Endothelial cell of umbilical vein (primary cell): ENCODE measurements at regions of chr12 and their contacts with region 1.

Region 1: GRCh38 chr12:69662764-69663163 is 36.3 kb downstream of the BEST3 start:
- DNase-seq: no peak
- H3K4me3 ChIP-seq: no peak overlapping the region
- H3K27ac ChIP-seq: no peak overlapping the region
- H3K4me1 ChIP-seq: no peaks in the 10 kb centered on the region
- H3K27me3 ChIP-seq: peaks cover 2% of the 10 kb centered on the region in 2 experiments
- CTCF ChIP-seq: no peak
- POLR2A ChIP-seq: no peak

Region 2: DNA sequence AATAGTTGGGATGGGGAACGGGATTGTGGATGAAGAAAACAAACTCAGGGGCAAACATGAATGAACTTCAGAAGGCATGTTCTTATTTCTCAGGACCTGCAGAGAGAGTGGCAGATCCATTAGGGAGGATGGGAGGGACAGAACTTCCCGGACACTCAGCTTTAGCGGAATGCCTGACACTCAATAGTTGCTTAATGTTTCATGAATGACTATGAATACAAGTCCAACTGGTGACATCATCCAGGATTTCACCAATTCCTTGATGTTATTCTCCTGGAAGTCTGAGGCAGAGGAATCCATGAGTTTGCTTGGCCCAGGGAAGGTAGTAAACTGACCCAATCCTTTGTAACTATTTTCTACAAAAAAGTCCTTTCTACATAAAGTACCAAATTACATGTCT is 14.3 kb before region 1 on chr12:
- CTCF ChIA-PET with region 1: interaction called, 10 read pairs
- POLR2A ChIA-PET with region 1: no interaction called
- dilution Hi-C with region 1: no loop called
- intact Hi-C with region 1: no loop called
- DNase-seq: no peak
- H3K4me3 ChIP-seq: no peak overlapping the region
- H3K27ac ChIP-seq: no peak overlapping the region
- H3K4me1 ChIP-seq: no peaks in the 10 kb centered on the region
- H3K27me3 ChIP-seq: peaks cover 2 to 3% of the 10 kb centered on the region in 2 experiments
- CTCF ChIP-seq: no peak
- POLR2A ChIP-seq: no peak